ENCODE measurements at regions of chr1 and their contacts with region 1.

Region 1: GRCh38 chr1:6448749-6449631 is 17.0 kb downstream of the TNFRSF25 start:
- DNase-seq: no peak
- ATAC-seq: peak; percentile 18
- H3K4me3 ChIP-seq: peak overlapping the region; percentile 59 to 69
- H3K27ac ChIP-seq: peak overlapping the region; percentile 98
- H3K4me1 ChIP-seq: peaks cover 16 to 57% of the 10 kb centered on the region in 2 experiments
- H3K27me3 ChIP-seq: no peaks in the 10 kb centered on the region
- CTCF ChIP-seq: no peak
- POLR2A ChIP-seq: no peak
- RAD21 ChIP-seq: no peak

Region 2: GRCh38 chr1:5913078-5913845 is 535.7 kb before region 1 on chr1:
- CTCF ChIA-PET with region 1: no interaction called
- POLR2A ChIA-PET with region 1: no interaction called
- RAD21 ChIA-PET with region 1: no interaction called
- intact Hi-C with region 1: no loop called
- DNase-seq: no peak
- ATAC-seq: no peak
- H3K4me3 ChIP-seq: no peak overlapping the region
- H3K27ac ChIP-seq: no peak overlapping the region
- H3K4me1 ChIP-seq: peaks cover 5 to 6% of the 10 kb centered on the region in 2 experiments; a peak in 3 of 4 replicates
- H3K27me3 ChIP-seq: no peaks in the 10 kb centered on the region
- CTCF ChIP-seq: no peak
- POLR2A ChIP-seq: no peak
- RAD21 ChIP-seq: no peak

Region 3: GRCh38 chr1:6016191-6016865 is 432.7 kb before region 1 on chr1:
- CTCF ChIA-PET with region 1: no interaction called
- POLR2A ChIA-PET with region 1: no interaction called
- RAD21 ChIA-PET with region 1: no interaction called
- intact Hi-C with region 1: no loop called
- DNase-seq: no peak
- ATAC-seq: no peak
- H3K4me3 ChIP-seq: no peak overlapping the region
- H3K27ac ChIP-seq: no peak overlapping the region
- H3K4me1 ChIP-seq: peaks cover 0 to 11% of the 10 kb centered on the region in 2 experiments; a peak in 2 of 4 replicates
- H3K27me3 ChIP-seq: no peaks in the 10 kb centered on the region
- CTCF ChIP-seq: no peak
- POLR2A ChIP-seq: no peak
- RAD21 ChIP-seq: no peak

Region 4: DNA sequence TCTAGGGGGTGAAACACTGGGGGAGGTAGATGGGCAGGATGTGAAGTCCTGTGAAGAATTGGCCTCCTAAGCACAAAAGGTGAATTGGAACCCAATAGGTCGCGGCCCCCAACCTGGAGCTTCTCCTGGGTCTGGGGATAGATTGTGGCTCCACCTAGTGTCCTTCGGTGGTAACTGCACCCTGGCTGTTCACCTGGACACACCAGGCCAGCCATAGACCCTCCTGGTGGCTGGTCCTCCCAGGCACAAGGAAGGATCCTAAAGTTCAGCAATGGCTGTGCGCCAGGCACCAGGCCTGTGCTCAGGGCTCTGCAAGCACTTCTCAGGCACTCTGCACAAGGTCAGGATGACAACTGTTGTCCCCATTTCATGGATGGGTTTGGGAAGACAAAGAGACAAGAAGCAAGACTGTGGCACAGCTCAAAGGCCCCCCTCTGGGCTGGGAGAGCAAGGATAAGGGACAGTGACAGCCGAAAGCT is 10.9 kb before region 1 on chr1:
- CTCF ChIA-PET with region 1: interaction called, 18 read pairs
- POLR2A ChIA-PET with region 1: interaction called, 5 read pairs
- RAD21 ChIA-PET with region 1: interaction called in 1 of 2 experiments, 3 read pairs
- intact Hi-C with region 1: no loop called
- DNase-seq: no peak
- ATAC-seq: peak; percentile 52
- H3K4me3 ChIP-seq: no peak overlapping the region
- H3K27ac ChIP-seq: no peak overlapping the region
- H3K4me1 ChIP-seq: peaks cover 8 to 27% of the 10 kb centered on the region in 2 experiments
- H3K27me3 ChIP-seq: no peaks in the 10 kb centered on the region
- CTCF ChIP-seq: peak in 2 of 3 experiments; percentile 93; a peak in 4 of 6 replicates
- POLR2A ChIP-seq: no peak
- RAD21 ChIP-seq: no peak

Region 5: DNA sequence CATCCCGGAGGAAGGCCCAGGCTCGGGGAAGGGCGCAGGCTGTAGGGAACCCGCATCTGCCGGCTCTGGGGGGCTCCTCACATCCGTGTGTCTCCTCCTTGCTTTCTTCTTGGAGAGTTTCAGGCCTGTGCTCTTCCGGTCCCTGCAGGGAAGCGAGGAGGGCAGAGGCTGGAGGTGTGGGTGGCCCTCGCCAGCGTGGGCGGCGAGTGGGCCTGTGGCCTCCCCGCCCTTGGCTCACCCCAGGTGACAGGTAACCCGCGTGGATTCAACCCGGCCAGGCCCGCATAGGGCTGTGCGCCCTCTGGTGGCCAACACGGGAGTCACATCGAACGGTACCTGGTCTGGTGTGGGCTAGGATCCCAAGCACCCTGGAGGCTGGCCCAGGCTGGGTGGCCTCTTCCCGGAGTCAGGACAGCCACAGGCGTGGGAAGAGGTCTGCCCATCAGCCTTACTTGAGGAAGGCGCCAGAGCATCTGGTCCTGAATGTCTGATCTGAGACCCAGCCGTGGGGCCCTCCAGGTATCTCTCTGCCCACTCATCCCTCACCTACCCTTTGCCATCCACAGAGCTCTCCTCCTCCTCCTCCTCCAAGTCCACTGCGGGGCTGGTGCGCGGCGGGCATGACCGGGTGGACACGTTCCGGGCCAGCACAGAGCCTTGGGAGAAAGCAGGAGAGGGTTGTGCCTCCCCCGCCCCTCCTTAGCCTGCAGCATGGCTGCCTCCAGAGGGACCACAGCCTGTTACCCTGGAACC is 26.6 kb after region 1 on chr1:
- CTCF ChIA-PET with region 1: interaction called, 11 read pairs
- POLR2A ChIA-PET with region 1: no interaction called
- RAD21 ChIA-PET with region 1: interaction called in 1 of 2 experiments, 5 read pairs
- intact Hi-C with region 1: no loop called
- DNase-seq: no peak
- ATAC-seq: peak; percentile 67
- H3K4me3 ChIP-seq: no peak overlapping the region
- H3K27ac ChIP-seq: peak overlapping the region; percentile 33; the same call in 1 of the 2 replicates
- H3K4me1 ChIP-seq: peaks cover 31 to 47% of the 10 kb centered on the region in 2 experiments
- H3K27me3 ChIP-seq: no peaks in the 10 kb centered on the region
- CTCF ChIP-seq: peak; percentile 62 to 96 (median 93); a peak in 5 of 6 replicates
- POLR2A ChIP-seq: no peak
- RAD21 ChIP-seq: no peak

Region 6: DNA sequence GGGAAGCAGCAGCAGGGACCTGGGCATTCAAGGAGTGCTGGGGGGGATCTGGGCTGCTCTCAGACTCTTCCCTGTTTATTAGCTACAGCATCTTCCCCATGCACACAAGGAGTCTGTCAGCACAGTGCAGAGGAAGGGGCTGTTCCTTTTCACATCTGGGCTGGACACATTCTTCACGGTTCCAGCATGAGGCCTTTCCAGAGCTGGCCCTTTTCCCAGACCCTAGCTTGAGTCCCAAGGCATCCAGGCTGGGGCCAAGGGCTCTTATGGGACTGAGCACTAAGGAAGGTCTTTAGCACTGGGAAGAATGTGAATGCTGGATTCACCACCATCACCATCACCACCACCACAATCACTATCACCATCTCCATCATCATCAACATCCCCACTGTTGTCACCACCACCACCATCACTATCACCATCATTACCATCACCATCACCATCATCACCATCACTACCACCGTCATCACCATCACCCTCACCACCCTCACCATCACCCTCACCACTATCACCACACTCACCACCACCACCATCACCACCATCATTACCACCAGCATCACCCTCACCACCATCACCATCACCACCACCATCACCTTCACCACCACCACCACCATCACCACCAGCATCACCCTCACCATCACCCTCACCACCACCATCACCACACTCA is 1540.9 kb after region 1 on chr1:
- CTCF ChIA-PET with region 1: no interaction called
- POLR2A ChIA-PET with region 1: no interaction called
- RAD21 ChIA-PET with region 1: no interaction called
- intact Hi-C with region 1: no loop called
- DNase-seq: no peak
- ATAC-seq: no peak
- H3K4me3 ChIP-seq: no peak overlapping the region
- H3K27ac ChIP-seq: no peak overlapping the region
- H3K4me1 ChIP-seq: peaks cover 0 to 6% of the 10 kb centered on the region in 2 experiments; a peak in 2 of 4 replicates
- H3K27me3 ChIP-seq: no peaks in the 10 kb centered on the region
- CTCF ChIP-seq: no peak
- POLR2A ChIP-seq: no peak
- RAD21 ChIP-seq: no peak